ENCODE measurements at regions of chr1 and their contacts with region 1.

Region 1: GRCh38 chr1:206635080-206635977 is at the start of gene DYRK3:
- DNase-seq: peak; percentile 78
- H3K4me3 ChIP-seq: peak within 1 kb of the TSS; percentile 80
- H3K27ac ChIP-seq: peak within 1 kb of the TSS; percentile 69
- H3K27me3 ChIP-seq: no peaks in the 10 kb centered on the region
- CTCF ChIP-seq: no peak
- polyA plus RNA-seq, gene DYRK3: 13.4 and 13.8 TPM in 2 replicates

Region 2: GRCh38 chr1:206430031-206430983 is 205.0 kb before region 1 on chr1:
- CTCF ChIA-PET with region 1: no interaction called
- POLR2A ChIA-PET with region 1: no interaction called
- DNase-seq: peak; percentile 66
- H3K4me3 ChIP-seq: no peak overlapping the region
- H3K27ac ChIP-seq: peak overlapping the region; percentile 62
- H3K27me3 ChIP-seq: no peaks in the 10 kb centered on the region
- CTCF ChIP-seq: peak; percentile 44

Region 3: DNA sequence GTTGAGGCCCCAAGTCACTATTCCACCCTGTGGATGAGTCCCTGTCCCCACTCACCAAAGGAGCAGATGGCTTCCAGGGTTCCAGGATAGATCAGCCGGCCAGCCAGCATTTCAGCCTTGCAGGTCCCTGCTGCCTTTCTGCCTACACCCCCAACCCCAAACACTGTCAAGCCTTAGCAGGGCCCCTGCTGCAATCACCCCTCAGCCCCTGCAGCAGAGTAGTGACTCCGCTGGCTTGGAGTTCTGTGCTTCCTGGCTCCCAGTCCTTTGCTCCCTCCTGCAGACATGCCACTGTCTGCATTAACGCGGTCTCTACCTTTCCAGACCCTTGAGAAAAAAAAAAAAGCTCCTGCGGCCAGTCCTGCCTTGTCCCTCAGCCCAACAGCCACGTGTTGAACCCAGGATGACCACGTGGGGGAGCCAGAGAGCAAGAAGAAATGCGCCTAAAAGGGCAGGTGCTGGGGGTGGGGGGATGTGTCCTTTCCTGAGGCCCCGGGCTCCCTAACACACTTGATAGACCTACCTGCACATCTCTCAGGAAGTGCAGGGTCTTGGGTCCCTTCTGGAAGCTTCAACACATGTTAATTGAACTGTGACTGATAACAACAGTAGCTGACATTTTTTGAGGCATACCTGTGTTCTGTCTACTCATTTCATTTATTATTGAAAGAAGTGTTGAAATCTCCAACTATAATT is 90.6 kb before region 1 on chr1:
- CTCF ChIA-PET with region 1: no interaction called
- POLR2A ChIA-PET with region 1: no interaction called
- DNase-seq: no peak
- H3K4me3 ChIP-seq: no peak overlapping the region
- H3K27ac ChIP-seq: no peak overlapping the region
- H3K27me3 ChIP-seq: peaks cover 13% of the 10 kb centered on the region
- CTCF ChIP-seq: peak; percentile 88

Region 4: DNA sequence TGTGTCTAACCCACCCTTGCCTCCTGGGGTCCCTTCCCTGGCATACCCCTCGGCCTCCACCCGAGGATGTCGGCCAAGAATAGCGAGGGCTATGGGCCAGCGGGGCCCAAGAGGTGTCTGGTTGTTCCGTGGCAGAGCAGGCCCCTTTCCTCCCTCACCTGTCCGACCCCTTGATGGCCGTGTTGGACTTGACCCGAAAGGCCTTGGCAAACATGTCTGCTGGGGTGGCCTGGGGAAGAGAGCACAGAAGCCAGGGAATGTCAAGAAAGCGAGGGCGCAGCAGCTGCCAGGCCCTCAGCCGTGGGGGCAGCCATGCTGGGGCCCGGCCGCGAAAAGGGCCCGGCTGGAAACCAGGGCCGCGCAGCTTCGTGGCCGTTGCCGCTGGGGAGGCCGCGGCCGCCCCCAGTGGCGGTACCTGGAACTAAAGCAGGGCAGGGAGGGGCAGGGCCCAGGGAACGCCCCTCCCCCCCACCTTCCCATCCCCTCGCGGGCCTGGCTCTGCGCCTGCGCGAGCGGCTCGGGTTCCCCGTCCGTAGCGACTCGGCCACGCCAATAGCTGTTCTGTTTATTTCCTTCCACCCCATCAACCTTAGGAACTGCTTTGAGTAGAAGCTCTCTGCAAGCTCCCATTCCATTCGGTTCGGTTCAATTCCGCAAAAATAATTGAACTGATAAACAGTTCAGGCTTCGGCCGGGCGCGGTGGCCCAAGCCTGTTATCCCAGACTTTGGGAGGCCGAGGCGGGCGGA is 23.0 kb before region 1 on chr1 and contains the start of gene EIF2D:
- CTCF ChIA-PET with region 1: interaction called, 37 read pairs
- POLR2A ChIA-PET with region 1: interaction called, 19 read pairs
- DNase-seq: peak; percentile 73
- H3K4me3 ChIP-seq: peak within 1 kb of the TSS; percentile 93
- H3K27ac ChIP-seq: peak within 1 kb of the TSS; percentile 93
- H3K27me3 ChIP-seq: peaks cover 6% of the 10 kb centered on the region
- CTCF ChIP-seq: peak; percentile 91
- polyA plus RNA-seq, gene EIF2D: 71.8 and 74.0 TPM in 2 replicates

Region 5: GRCh38 chr1:206674745-206675175 is 39.4 kb after region 1 on chr1:
- CTCF ChIA-PET with region 1: interaction called, 14 read pairs
- POLR2A ChIA-PET with region 1: interaction called, 4 read pairs
- DNase-seq: peak; percentile 98
- H3K4me3 ChIP-seq: no peak overlapping the region
- H3K27ac ChIP-seq: peak overlapping the region; percentile 96
- H3K27me3 ChIP-seq: peaks cover 3% of the 10 kb centered on the region
- CTCF ChIP-seq: no peak

Region 6: GRCh38 chr1:206734499-206735142 is 99.3 kb after region 1 on chr1:
- CTCF ChIA-PET with region 1: interaction called, 13 read pairs
- POLR2A ChIA-PET with region 1: no interaction called
- DNase-seq: no peak
- H3K4me3 ChIP-seq: no peak overlapping the region
- H3K27ac ChIP-seq: no peak overlapping the region
- H3K27me3 ChIP-seq: no peaks in the 10 kb centered on the region
- CTCF ChIP-seq: peak; percentile 91

Region 7: GRCh38 chr1:206797534-206798383 is 162.4 kb after region 1 on chr1:
- CTCF ChIA-PET with region 1: no interaction called
- POLR2A ChIA-PET with region 1: no interaction called
- DNase-seq: no peak
- H3K4me3 ChIP-seq: no peak overlapping the region
- H3K27ac ChIP-seq: no peak overlapping the region
- H3K27me3 ChIP-seq: peaks cover 2% of the 10 kb centered on the region
- CTCF ChIP-seq: peak; percentile 53

Region 8: GRCh38 chr1:206982216-206982615 is 346.9 kb after region 1 on chr1:
- CTCF ChIA-PET with region 1: interaction called, 15 read pairs
- POLR2A ChIA-PET with region 1: no interaction called
- DNase-seq: no peak
- H3K4me3 ChIP-seq: no peak overlapping the region
- H3K27ac ChIP-seq: no peak overlapping the region
- H3K27me3 ChIP-seq: peaks cover 42% of the 10 kb centered on the region
- CTCF ChIP-seq: peak; percentile 67

Region 9: GRCh38 chr1:207499573-207499972 is 864.2 kb after region 1 on chr1:
- CTCF ChIA-PET with region 1: no interaction called
- POLR2A ChIA-PET with region 1: no interaction called
- DNase-seq: peak; percentile 10
- H3K4me3 ChIP-seq: no peak overlapping the region
- H3K27ac ChIP-seq: no peak overlapping the region
- H3K27me3 ChIP-seq: peaks cover 16% of the 10 kb centered on the region
- CTCF ChIP-seq: peak; percentile 76